ENCODE measurements at regions of chr14 and their contacts with region 1.

Region 1: GRCh38 chr14:55094321-55095157 is 34.5 kb upstream of the LGALS3 start:
- DNase-seq: peak; percentile 85
- ATAC-seq: peak; percentile 79
- H3K4me3 ChIP-seq: no peak overlapping the region
- H3K27ac ChIP-seq: no peak overlapping the region
- H3K4me1 ChIP-seq: peaks cover 3% of the 10 kb centered on the region; the same call in 1 of the 2 replicates
- H3K27me3 ChIP-seq: no peaks in the 10 kb centered on the region
- CTCF ChIP-seq: no peak
- POLR2A ChIP-seq: no peak
- RAD21 ChIP-seq: no peak

Region 2: DNA sequence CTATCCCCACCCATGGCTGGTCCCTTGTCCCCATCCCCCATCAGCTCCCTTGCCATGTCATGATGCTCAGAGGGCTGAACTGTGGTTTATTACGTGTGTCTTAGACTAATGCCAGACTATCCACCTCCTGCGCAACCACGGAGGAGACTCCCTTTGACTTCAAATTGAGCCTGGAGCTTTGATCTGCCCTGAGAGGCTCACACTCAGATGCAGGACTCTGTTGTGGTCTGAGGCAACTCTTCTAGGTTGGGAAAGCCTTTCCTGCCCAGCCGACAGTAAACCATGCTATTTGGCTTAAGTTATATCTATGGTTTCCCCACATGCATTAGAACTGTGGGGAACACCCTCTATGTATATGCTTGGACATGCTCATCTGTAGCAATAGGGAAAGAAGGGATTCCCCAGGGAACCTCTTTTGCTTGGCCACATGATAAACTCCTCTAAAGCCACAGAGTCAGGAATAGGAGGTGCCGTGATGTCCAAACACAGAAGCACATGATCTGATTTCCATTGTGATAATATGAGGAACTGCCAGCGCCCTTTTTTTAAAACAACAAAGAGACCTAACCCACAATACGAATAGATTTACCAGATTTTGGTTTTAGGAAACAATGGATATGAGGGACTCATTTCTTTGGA is 23.4 kb after region 1 on chr14:
- CTCF ChIA-PET with region 1: no interaction called
- POLR2A ChIA-PET with region 1: no interaction called
- dilution Hi-C with region 1: no loop called
- in situ Hi-C with region 1: no loop called
- intact Hi-C with region 1: no loop called
- DNase-seq: no peak
- ATAC-seq: no peak; the same call in 1 of the 2 replicates
- H3K4me3 ChIP-seq: no peak overlapping the region
- H3K27ac ChIP-seq: no peak overlapping the region
- H3K4me1 ChIP-seq: peaks cover 11% of the 10 kb centered on the region
- H3K27me3 ChIP-seq: no peaks in the 10 kb centered on the region
- CTCF ChIP-seq: no peak
- POLR2A ChIP-seq: no peak
- RAD21 ChIP-seq: no peak

Region 3: GRCh38 chr14:55129428-55130195 is 35.1 kb after region 1 on chr14:
- CTCF ChIA-PET with region 1: no interaction called
- POLR2A ChIA-PET with region 1: no interaction called
- dilution Hi-C with region 1: no loop called
- in situ Hi-C with region 1: loop called (anchors 5 kb)
- intact Hi-C with region 1: loop called (anchors 5 kb)
- DNase-seq: peak; percentile 74
- ATAC-seq: peak; percentile 72
- H3K4me3 ChIP-seq: peak overlapping the region; percentile 78
- H3K27ac ChIP-seq: peak overlapping the region; percentile 71
- H3K4me1 ChIP-seq: peaks cover 11% of the 10 kb centered on the region
- H3K27me3 ChIP-seq: no peaks in the 10 kb centered on the region
- CTCF ChIP-seq: no peak
- POLR2A ChIP-seq: peak; percentile 76
- RAD21 ChIP-seq: no peak

Region 4: DNA sequence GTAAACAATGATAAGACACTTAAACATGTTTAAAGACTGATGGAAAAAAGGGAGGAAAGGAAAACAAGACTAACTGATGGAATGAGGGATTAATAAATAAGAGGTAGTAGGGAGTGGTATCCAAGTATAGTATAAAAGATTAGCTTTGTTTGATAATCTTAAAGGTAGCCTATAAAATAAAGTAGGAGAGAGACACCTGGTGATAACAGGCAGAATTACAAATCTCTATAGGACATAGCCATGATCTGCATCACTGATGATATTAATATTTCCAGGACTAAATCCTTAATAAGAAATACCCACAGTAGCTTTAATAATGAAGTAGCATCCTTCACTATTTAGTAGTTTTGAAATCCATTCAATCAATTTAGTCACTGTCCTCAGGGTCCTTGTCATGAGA is 66.5 kb after region 1 on chr14:
- CTCF ChIA-PET with region 1: interaction called, 8 read pairs
- POLR2A ChIA-PET with region 1: interaction called, 13 read pairs
- dilution Hi-C with region 1: no loop called
- in situ Hi-C with region 1: no loop called
- intact Hi-C with region 1: loop called (anchors 1 kb)
- DNase-seq: peak; percentile 54
- ATAC-seq: peak; percentile 89
- H3K4me3 ChIP-seq: no peak overlapping the region
- H3K27ac ChIP-seq: no peak overlapping the region
- H3K4me1 ChIP-seq: no peaks in the 10 kb centered on the region
- H3K27me3 ChIP-seq: no peaks in the 10 kb centered on the region
- CTCF ChIP-seq: peak; percentile 67
- POLR2A ChIP-seq: no peak
- RAD21 ChIP-seq: peak; percentile 68

Region 5: DNA sequence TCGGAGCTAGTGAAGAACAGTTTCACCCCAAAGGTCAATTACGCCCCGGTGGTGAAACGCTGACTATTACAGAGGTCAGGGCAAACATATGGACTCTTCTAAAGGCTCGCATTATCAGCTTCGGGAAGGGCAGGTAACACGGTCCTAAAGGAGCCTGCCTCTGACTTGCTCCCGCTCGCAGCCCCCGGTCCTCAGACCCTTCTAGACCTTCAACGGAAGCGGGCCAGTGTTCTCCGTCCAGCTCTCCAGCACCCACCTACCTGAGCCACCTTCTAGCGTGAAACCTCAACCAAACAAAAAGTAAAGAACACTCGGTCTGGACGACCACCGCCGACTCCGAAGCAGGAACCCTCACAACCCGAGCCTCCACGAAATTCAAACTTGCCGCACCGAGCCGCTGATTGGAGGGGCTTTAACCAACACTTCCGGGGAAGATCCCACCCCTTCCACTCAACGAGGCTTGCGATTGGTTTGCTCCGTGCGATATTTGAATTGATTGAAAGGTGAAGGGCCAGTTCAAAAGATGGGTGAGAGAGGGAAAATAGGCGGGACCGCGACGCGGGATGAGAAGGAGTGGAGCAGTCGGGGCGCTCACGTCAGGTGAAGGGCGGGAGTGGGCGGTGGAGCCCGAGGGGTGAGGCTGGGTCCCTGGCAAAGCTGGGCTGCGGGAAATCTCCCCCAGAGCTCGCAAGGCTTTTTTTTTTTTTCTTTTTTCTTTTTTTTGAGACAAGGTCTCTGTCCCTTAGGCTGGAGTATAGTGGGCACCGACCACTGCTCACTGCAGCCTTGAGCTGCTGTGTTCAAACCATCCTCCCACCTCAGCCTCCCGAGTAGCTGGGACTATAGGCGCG is 96.9 kb after region 1 on chr14 and contains the start of gene DLGAP5:
- CTCF ChIA-PET with region 1: no interaction called
- POLR2A ChIA-PET with region 1: no interaction called
- dilution Hi-C with region 1: no loop called
- in situ Hi-C with region 1: no loop called
- intact Hi-C with region 1: loop called (anchors 1 kb)
- DNase-seq: peak; percentile 94
- ATAC-seq: peak; percentile 98
- H3K4me3 ChIP-seq: peak within 1 kb of the TSS; percentile 52
- H3K27ac ChIP-seq: peak within 1 kb of the TSS; percentile 40
- H3K4me1 ChIP-seq: no peaks in the 10 kb centered on the region
- H3K27me3 ChIP-seq: no peaks in the 10 kb centered on the region
- CTCF ChIP-seq: no peak
- POLR2A ChIP-seq: 0 out of 2 replicates have a peak, but pooled peaks have one; percentile 35
- RAD21 ChIP-seq: no peak
- total RNA-seq, gene DLGAP5: 19.0 and 40.3 TPM in 2 replicates